ENCODE measurements at regions of chr16 and their contacts with region 1.

Region 1: DNA sequence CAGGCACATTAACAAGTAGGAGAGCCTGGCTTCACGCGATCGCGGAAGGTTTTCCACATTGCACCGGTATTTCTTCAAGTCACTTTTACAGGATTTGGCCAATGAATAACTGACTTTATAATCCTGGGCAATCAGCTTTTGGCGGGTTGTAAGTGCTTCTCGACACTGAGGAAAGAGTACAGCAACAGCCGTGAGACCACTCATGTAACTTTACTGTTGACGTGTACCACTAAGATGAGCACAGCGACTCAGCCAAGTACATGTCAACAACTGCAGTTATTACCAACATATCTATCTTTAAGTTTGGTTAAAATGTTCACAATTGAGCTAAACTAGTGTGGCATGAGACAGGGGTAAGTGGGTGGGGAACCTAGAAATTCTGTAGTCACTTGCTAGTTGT is 71.7 kb upstream of the CLEC18B start:
- DNase-seq: no peak
- H3K4me3 Mint-ChIP-seq: no peak overlapping the region
- H3K27ac Mint-ChIP-seq: no peak overlapping the region
- H3K4me1 Mint-ChIP-seq: no peaks in the 10 kb centered on the region
- H3K27me3 Mint-ChIP-seq: no peaks in the 10 kb centered on the region

Region 2: DNA sequence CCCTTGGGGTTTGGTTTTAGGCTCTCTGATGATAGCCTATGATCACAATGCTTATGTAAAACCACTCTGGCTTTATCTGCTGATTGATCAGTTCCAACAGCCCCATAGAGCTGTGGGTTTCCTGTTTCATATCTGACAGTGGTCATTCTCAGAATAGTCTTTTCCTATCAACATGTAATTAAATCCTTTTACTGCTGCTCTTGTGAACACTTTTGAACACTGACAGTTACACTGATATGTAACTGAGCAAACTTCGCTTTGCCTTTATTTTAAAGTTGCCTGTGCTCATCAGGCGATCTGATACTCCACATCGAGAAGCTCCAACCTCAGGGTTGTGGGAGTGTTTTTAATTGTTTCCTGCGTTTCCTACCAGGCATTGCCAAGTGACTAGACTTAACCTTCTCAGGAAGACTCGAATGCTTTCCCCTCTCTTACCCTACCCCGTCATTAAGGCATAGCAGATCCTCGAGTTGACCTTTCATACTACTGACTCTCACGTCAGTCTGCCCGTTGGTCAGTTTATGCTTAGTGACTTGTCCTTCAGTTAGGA is 54.4 kb before region 1 on chr16:
- intact Hi-C with region 1: loop called (anchors 2 kb)
- DNase-seq: peak; percentile 18
- H3K4me3 Mint-ChIP-seq: peak overlapping the region; percentile 13
- H3K27ac Mint-ChIP-seq: no peak overlapping the region
- H3K4me1 Mint-ChIP-seq: peaks cover 20% of the 10 kb centered on the region
- H3K27me3 Mint-ChIP-seq: peaks cover 16% of the 10 kb centered on the region

Region 3: DNA sequence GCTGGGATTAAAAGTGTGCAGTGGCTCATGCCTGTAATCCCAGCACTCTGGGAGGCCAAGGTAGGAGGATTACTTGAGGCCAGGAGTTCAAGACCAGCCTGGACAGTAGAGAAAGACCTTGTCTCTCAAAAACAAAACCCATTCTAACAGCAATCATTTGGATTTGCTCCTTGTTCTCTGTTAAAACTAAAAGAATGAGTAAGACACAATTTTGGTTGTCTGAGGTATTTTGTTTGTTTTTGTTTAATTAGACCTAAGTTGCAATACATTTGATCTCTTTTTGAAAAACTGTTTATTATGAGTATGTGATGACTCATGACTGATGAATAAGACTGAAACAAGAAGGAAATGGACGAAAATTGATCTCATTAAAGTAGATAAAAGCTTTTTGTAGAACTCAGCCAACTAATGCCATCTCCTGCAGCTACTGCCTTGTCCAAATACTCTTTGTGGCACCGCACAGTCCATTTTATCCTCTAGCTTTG is 84.9 kb after region 1 on chr16:
- intact Hi-C with region 1: loop called (anchors 1 kb)
- DNase-seq: no peak
- H3K4me3 Mint-ChIP-seq: no peak overlapping the region
- H3K27ac Mint-ChIP-seq: peak overlapping the region; percentile 0
- H3K4me1 Mint-ChIP-seq: peaks cover 28% of the 10 kb centered on the region
- H3K27me3 Mint-ChIP-seq: no peaks in the 10 kb centered on the region

Measured in activated T-helper 2 cell treated with anti-CD3 and anti-CD28 coated beads, Interferon-gamma antibody, Interleukin-2, Interleukin-4, amounts not matched to agents 10 μg/mL and 5 μg/mL and 100 μg/mL, durations not matched to agents 14 hours and 24 hours and 36 hours (primary cell).